Psoas muscle (tissue), 8 donors: ENCODE measurements at regions of chrX and their contacts with region 1.

Region 1: GRCh38 chrX:115330498-115331168 is 41.1 kb downstream of the LUZP4 start:
- DNase-seq: peak in 1 of 2 donors; percentile 22
- ATAC-seq: peak in 2 of 4 donors; percentile 56 to 76
- H3K4me3 ChIP-seq: no peak overlapping the region
- H3K27ac ChIP-seq: no peak overlapping the region
- H3K4me1 ChIP-seq: no peaks in the 10 kb centered on the region
- H3K27me3 ChIP-seq: peaks cover 0 to 13% (median 0%) of the 10 kb centered on the region in 3 donors
- CTCF ChIP-seq: peak; percentile 88

Region 2: GRCh38 chrX:115560978-115561604 is 230.5 kb after region 1 on chrX and contains the start of gene PLS3:
- intact Hi-C with region 1: loop called in 1 of 2 experiments (anchors 5 kb)
- DNase-seq: peak; percentile 80 to 87
- ATAC-seq: peak; percentile 79 to 90 (median 86)
- H3K4me3 ChIP-seq: peak within 1 kb of the TSS; percentile 75
- H3K27ac ChIP-seq: peak within 1 kb of the TSS; percentile 81
- H3K4me1 ChIP-seq: no peaks in the 10 kb centered on the region
- H3K27me3 ChIP-seq: peaks cover 0 to 75% (median 0%) of the 10 kb centered on the region in 3 donors
- CTCF ChIP-seq: no peak
- total RNA-seq, gene PLS3: 14.4 to 31.3 (median 21.6) TPM

Region 3: DNA sequence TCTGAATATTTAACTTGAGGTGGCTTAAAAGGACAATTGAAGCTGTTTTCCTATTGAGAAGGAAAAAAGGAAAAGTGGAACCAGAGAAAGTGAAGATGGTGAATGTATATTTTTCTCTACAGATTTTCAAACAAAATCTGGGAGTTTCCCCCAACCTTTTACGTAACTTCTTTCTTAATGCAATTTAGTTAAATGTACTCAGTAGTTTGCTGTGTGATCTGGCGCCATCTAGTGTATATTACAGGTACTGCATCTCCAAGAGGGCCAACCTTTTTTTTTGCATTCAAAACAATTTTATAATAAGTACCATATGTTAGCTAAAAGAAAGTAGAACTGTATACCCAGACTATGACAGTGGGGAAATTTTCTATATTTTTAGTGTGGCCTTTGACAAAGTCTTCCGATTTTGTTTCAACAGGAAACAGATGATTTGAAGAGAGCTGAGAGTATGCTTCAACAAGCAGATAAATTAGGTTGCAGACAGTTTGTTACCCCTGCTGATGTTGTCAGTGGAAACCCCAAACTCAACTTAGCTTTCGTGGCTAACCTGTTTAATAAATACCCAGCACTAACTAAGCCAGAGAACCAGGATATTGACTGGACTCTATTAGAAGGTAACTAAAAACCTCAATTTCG is 312.4 kb after region 1 on chrX:
- intact Hi-C with region 1: loop called (anchors 2 to 5 kb)
- DNase-seq: no peak
- ATAC-seq: peak in 3 of 4 donors; percentile 48 to 54 (median 50)
- H3K4me3 ChIP-seq: no peak overlapping the region
- H3K27ac ChIP-seq: no peak overlapping the region
- H3K4me1 ChIP-seq: no peaks in the 10 kb centered on the region
- H3K27me3 ChIP-seq: peaks cover 0 to 12% (median 0%) of the 10 kb centered on the region in 3 donors
- CTCF ChIP-seq: peak; percentile 99

Region 4: GRCh38 chrX:115690511-115691216 is 360.0 kb after region 1 on chrX:
- intact Hi-C with region 1: loop called (anchors 5 kb)
- DNase-seq: no peak
- ATAC-seq: peak; percentile 40 to 78 (median 71)
- H3K4me3 ChIP-seq: no peak overlapping the region
- H3K27ac ChIP-seq: no peak overlapping the region
- H3K4me1 ChIP-seq: no peaks in the 10 kb centered on the region
- H3K27me3 ChIP-seq: peaks cover 0 to 15% (median 0%) of the 10 kb centered on the region in 3 donors
- CTCF ChIP-seq: peak; percentile 80